ENCODE measurements at regions of chr1 and their contacts with region 1.

Region 1: GRCh38 chr1:6423321-6423999 is 1.1 kb upstream of the ESPN start:
- DNase-seq: peak; percentile 81
- H3K4me3 ChIP-seq: 0 out of 4 replicates have a peak overlapping the region, but pooled peaks of 1 of the 2 experiments have one; percentile 11
- H3K27ac ChIP-seq: no peak overlapping the region
- H3K4me1 ChIP-seq: peaks cover 6 to 18% of the 10 kb centered on the region in 2 experiments; a peak in 1 of 4 replicates
- H3K27me3 ChIP-seq: peaks cover 26% of the 10 kb centered on the region
- CTCF ChIP-seq: peak; percentile 65
- EP300 ChIP-seq: no peak
- RAD21 ChIP-seq: peak; percentile 42

Region 2: GRCh38 chr1:6448749-6449631 is 25.5 kb after region 1 on chr1:
- CTCF ChIA-PET with region 1: interaction called, 290 read pairs
- POLR2A ChIA-PET with region 1: no interaction called
- DNase-seq: peak; percentile 78
- H3K4me3 ChIP-seq: peak overlapping the region in 1 of 2 experiments; percentile 12; a peak in 1 of 4 replicates
- H3K27ac ChIP-seq: no peak overlapping the region
- H3K4me1 ChIP-seq: no peaks in the 10 kb centered on the region; a peak in 1 of 4 replicates
- H3K27me3 ChIP-seq: peaks cover 44% of the 10 kb centered on the region
- CTCF ChIP-seq: no peak
- EP300 ChIP-seq: no peak
- RAD21 ChIP-seq: no peak

Region 3: GRCh38 chr1:6686294-6686693 is 262.8 kb after region 1 on chr1:
- CTCF ChIA-PET with region 1: no interaction called
- POLR2A ChIA-PET with region 1: no interaction called
- DNase-seq: no peak
- H3K4me3 ChIP-seq: peak overlapping the region in 1 of 2 experiments; percentile 39; a peak in 1 of 4 replicates
- H3K27ac ChIP-seq: peak overlapping the region in 1 of 2 experiments; percentile 59; a peak in 2 of 4 replicates
- H3K4me1 ChIP-seq: peaks cover 2 to 9% of the 10 kb centered on the region in 2 experiments; a peak in 2 of 4 replicates
- H3K27me3 ChIP-seq: no peaks in the 10 kb centered on the region
- CTCF ChIP-seq: no peak
- EP300 ChIP-seq: no peak
- RAD21 ChIP-seq: no peak